IMR-90 (cell line): ENCODE measurements at regions of chr5 and their contacts with region 1.

Region 1: DNA sequence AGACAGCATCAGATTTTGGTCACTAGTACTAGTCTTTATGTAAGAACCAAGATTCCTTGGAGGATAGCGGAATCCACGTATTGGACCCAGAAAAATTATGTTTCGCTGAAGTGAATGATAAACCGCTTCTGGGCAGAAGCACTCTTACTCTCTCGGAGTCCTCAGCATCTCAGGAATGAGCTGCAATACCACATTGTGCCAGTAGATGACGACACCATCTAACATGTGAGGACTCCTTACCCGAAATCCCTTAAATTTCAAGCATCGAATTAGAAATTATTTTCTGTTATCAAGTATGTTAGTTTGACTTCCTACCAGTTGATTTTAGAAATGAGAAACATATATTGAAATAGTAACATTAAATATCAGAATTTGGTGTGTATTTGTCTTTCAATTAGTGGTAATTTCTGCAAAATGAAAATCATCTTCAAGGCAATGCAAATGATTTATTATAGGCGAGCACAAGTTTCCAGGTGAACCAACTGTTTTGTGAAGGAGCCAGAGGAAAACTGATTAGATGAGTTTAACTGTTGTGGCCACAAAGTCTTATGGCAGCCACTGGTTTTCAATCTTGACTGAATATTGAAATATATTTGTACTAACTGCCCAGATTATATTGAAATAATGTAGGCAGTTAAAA is 66.0 kb upstream of the CAMK4 start:
- DNase-seq: peak; percentile 85
- ATAC-seq: peak; percentile 95
- H3K4me3 ChIP-seq: no peak overlapping the region
- H3K27ac ChIP-seq: no peak overlapping the region
- H3K4me1 ChIP-seq: no peaks in the 10 kb centered on the region
- H3K27me3 ChIP-seq: no peaks in the 10 kb centered on the region
- CTCF ChIP-seq: peak; percentile 99
- POLR2A ChIP-seq: 0 out of 2 replicates have a peak, but pooled peaks have one; percentile 28
- RAD21 ChIP-seq: peak; percentile 97

Region 2: DNA sequence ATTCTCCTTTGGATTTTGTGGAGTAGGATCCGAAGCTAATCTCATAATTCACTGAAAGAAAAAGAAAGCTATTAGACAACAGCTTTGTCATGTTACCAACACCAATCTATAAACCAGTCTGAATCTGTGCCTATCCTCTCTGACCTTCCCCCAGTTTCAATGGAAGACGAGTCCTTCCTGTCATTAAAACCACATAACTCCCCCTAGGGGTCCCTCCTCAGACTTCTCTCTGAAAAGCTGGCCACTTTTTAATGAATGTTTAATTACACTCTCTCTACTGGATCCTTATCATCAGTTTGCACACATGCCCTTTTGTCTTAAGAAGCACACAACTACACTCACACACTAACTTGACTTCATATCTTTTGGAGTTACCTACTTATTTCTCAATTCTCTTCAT is 184.7 kb before region 1 on chr5:
- CTCF ChIA-PET with region 1: no interaction called
- POLR2A ChIA-PET with region 1: no interaction called
- dilution Hi-C with region 1: no loop called
- in situ Hi-C with region 1: no loop called
- intact Hi-C with region 1: no loop called
- DNase-seq: no peak
- ATAC-seq: no peak
- H3K4me3 ChIP-seq: no peak overlapping the region
- H3K27ac ChIP-seq: no peak overlapping the region
- H3K4me1 ChIP-seq: peaks cover 6% of the 10 kb centered on the region
- H3K27me3 ChIP-seq: no peaks in the 10 kb centered on the region
- CTCF ChIP-seq: no peak
- POLR2A ChIP-seq: no peak
- RAD21 ChIP-seq: no peak

Region 3: DNA sequence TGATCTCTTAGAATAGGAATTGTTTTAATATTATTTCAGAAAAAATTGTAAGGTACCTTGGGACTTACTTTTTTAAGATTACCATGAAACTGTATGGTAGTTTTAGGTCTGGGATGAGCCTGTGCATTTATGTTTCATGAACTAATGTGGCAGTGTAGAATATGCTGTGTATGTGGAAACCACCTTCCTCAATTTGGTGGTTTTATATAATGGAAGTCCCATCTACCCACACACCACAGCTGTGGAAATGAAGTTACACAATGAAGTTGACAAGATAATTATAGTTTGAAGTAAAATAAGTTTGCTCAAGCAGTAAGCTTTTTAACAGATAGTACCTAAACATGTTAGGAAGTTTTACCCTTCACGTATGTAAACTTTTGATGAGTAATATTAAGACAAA is 41.7 kb before region 1 on chr5:
- CTCF ChIA-PET with region 1: no interaction called
- POLR2A ChIA-PET with region 1: no interaction called
- dilution Hi-C with region 1: no loop called
- in situ Hi-C with region 1: no loop called
- intact Hi-C with region 1: no loop called
- DNase-seq: peak; percentile 11
- ATAC-seq: no peak
- H3K4me3 ChIP-seq: no peak overlapping the region
- H3K27ac ChIP-seq: no peak overlapping the region
- H3K4me1 ChIP-seq: peaks cover 1% of the 10 kb centered on the region; the same call in 1 of the 2 replicates
- H3K27me3 ChIP-seq: no peaks in the 10 kb centered on the region
- CTCF ChIP-seq: no peak
- POLR2A ChIP-seq: no peak
- RAD21 ChIP-seq: no peak

Region 4: GRCh38 chr5:111143910-111144309 is 14.3 kb before region 1 on chr5:
- CTCF ChIA-PET with region 1: no interaction called
- POLR2A ChIA-PET with region 1: no interaction called
- dilution Hi-C with region 1: no loop called
- in situ Hi-C with region 1: no loop called
- intact Hi-C with region 1: no loop called
- DNase-seq: peak; percentile 73
- ATAC-seq: peak; percentile 66
- H3K4me3 ChIP-seq: no peak overlapping the region
- H3K27ac ChIP-seq: no peak overlapping the region
- H3K4me1 ChIP-seq: no peaks in the 10 kb centered on the region
- H3K27me3 ChIP-seq: no peaks in the 10 kb centered on the region
- CTCF ChIP-seq: no peak
- POLR2A ChIP-seq: no peak
- RAD21 ChIP-seq: no peak

Region 5: DNA sequence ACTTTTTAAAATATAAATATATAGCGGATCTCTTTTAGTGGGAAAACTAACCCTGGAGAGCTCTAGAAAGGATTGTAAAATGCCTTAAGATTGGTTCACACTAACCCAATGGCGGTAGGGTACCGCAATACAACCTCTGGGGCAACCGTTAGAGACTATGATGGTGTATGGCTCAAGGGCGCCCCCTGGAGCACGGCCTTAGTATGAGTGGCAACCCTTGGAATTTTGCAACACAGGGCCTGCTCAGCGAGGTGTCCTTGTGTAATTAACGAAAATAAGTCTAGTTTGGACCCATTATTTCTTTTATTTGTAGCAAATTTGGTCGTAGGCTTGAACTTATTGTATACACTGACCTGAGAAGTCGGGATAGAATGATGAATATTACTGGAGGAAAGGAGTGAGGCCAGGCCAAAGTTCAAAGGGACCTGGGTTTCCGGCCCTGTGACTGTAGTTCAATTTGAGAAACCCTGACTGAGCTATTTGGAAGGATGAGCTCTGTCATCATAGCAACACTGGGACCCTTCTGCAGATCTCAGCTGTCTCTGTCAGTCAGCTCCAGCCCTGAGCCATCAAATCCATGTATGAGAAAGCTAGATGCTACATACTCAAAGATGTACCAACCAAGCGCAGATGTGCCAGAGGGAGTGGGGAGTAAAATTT is 120.8 kb after region 1 on chr5:
- CTCF ChIA-PET with region 1: no interaction called
- POLR2A ChIA-PET with region 1: no interaction called
- dilution Hi-C with region 1: no loop called
- in situ Hi-C with region 1: no loop called
- intact Hi-C with region 1: loop called (anchors 1 kb)
- DNase-seq: no peak
- ATAC-seq: peak; percentile 51; the same call in 1 of the 2 replicates
- H3K4me3 ChIP-seq: no peak overlapping the region
- H3K27ac ChIP-seq: no peak overlapping the region
- H3K4me1 ChIP-seq: no peaks in the 10 kb centered on the region
- H3K27me3 ChIP-seq: no peaks in the 10 kb centered on the region
- CTCF ChIP-seq: peak; percentile 43; the same call in 1 of the 2 replicates
- POLR2A ChIP-seq: no peak
- RAD21 ChIP-seq: peak; percentile 47

Region 6: GRCh38 chr5:111345728-111346127 is 187.5 kb after region 1 on chr5:
- CTCF ChIA-PET with region 1: no interaction called
- POLR2A ChIA-PET with region 1: no interaction called
- dilution Hi-C with region 1: no loop called
- in situ Hi-C with region 1: no loop called
- intact Hi-C with region 1: no loop called
- DNase-seq: peak; percentile 12
- ATAC-seq: peak; percentile 11; the same call in 1 of the 2 replicates
- H3K4me3 ChIP-seq: no peak overlapping the region
- H3K27ac ChIP-seq: no peak overlapping the region
- H3K4me1 ChIP-seq: no peaks in the 10 kb centered on the region
- H3K27me3 ChIP-seq: no peaks in the 10 kb centered on the region
- CTCF ChIP-seq: no peak
- POLR2A ChIP-seq: no peak
- RAD21 ChIP-seq: no peak

Region 7: DNA sequence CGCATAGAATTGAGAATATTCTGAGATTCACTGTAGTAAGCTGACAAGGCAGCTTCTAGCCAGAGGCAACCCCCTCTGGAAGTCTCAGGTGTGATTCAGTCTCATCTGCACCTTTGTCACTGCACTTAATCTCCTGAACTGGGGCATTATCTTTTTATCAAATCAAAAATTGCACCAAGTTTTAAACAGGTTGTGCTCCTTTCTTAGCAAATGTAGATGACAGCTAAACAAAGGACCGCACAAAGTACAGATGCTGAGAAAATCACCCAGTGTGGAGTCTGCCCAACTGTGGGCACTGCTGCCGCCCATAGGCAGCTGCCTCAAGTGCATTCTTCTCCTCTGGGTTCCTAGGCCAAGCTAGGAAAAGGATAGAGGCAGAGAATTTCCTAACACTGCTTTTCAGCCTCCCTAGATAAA is 303.0 kb after region 1 on chr5:
- CTCF ChIA-PET with region 1: interaction called, 14 read pairs
- POLR2A ChIA-PET with region 1: interaction called, 4 read pairs
- dilution Hi-C with region 1: no loop called
- in situ Hi-C with region 1: loop called (anchors 10 kb)
- intact Hi-C with region 1: loop called (anchors 5 kb)
- DNase-seq: peak; percentile 25
- ATAC-seq: peak; percentile 89
- H3K4me3 ChIP-seq: no peak overlapping the region
- H3K27ac ChIP-seq: no peak overlapping the region
- H3K4me1 ChIP-seq: no peaks in the 10 kb centered on the region
- H3K27me3 ChIP-seq: no peaks in the 10 kb centered on the region
- CTCF ChIP-seq: peak; percentile 62
- POLR2A ChIP-seq: no peak
- RAD21 ChIP-seq: peak; percentile 75

Region 8: DNA sequence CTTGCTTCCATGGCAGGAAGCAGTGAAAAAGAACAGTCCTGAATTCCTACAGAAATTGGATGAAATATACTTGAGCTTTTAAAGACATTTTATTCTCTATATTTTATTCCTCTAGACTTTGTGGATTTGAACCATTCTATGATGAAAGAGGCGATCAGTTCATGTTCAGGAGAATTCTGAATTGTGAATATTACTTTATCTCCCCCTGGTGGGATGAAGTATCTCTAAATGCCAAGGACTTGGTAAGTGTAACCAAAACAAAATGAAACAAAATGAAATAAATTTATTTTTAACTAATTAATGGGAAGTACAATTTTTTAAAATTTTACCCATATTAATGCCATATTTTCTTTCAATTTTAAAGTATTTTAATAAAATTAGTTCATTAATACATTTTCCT is 320.0 kb after region 1 on chr5:
- CTCF ChIA-PET with region 1: no interaction called
- POLR2A ChIA-PET with region 1: no interaction called
- dilution Hi-C with region 1: no loop called
- in situ Hi-C with region 1: no loop called
- intact Hi-C with region 1: loop called (anchors 5 kb)
- DNase-seq: no peak
- ATAC-seq: no peak; the same call in 1 of the 2 replicates
- H3K4me3 ChIP-seq: no peak overlapping the region
- H3K27ac ChIP-seq: no peak overlapping the region
- H3K4me1 ChIP-seq: no peaks in the 10 kb centered on the region
- H3K27me3 ChIP-seq: no peaks in the 10 kb centered on the region
- CTCF ChIP-seq: peak; percentile 36; the same call in 1 of the 2 replicates
- POLR2A ChIP-seq: no peak
- RAD21 ChIP-seq: peak; percentile 37

Region 9: DNA sequence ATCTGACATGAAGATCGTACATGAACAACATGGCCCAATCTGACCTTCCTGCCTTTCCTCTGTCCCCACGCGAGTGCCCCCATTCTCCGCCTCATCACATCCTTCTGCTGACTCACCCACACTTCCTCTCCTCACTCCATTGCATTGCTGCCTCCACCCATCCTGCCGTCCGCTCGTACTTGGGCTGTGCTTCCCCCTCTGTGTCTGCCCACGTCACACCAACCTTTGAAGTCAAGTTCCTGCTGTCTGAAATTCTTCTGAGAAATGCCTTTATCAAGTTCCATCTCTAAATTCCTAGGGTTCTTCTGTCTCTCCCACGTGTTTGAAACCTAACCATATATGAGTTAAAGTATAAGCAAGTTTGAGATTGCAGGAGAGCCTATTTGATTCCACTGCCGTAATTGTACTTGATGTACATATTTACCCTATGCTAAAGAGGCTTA is 372.1 kb after region 1 on chr5:
- CTCF ChIA-PET with region 1: interaction called, 3 read pairs
- POLR2A ChIA-PET with region 1: no interaction called
- dilution Hi-C with region 1: no loop called
- in situ Hi-C with region 1: no loop called
- intact Hi-C with region 1: loop called (anchors 5 kb)
- DNase-seq: peak; percentile 41
- ATAC-seq: no peak
- H3K4me3 ChIP-seq: no peak overlapping the region
- H3K27ac ChIP-seq: no peak overlapping the region
- H3K4me1 ChIP-seq: peaks cover 1% of the 10 kb centered on the region; the same call in 1 of the 2 replicates
- H3K27me3 ChIP-seq: no peaks in the 10 kb centered on the region
- CTCF ChIP-seq: no peak
- POLR2A ChIP-seq: no peak
- RAD21 ChIP-seq: no peak

Region 10: GRCh38 chr5:111550279-111551020 is 392.2 kb after region 1 on chr5:
- CTCF ChIA-PET with region 1: interaction called, 4 read pairs
- POLR2A ChIA-PET with region 1: no interaction called
- dilution Hi-C with region 1: no loop called
- in situ Hi-C with region 1: no loop called
- intact Hi-C with region 1: loop called (anchors 1 kb)
- DNase-seq: peak; percentile 99
- ATAC-seq: peak; percentile 96
- H3K4me3 ChIP-seq: no peak overlapping the region
- H3K27ac ChIP-seq: no peak overlapping the region
- H3K4me1 ChIP-seq: no peaks in the 10 kb centered on the region; the same call in 1 of the 2 replicates
- H3K27me3 ChIP-seq: no peaks in the 10 kb centered on the region
- CTCF ChIP-seq: peak; percentile 81
- POLR2A ChIP-seq: no peak
- RAD21 ChIP-seq: peak; percentile 91